ENCODE measurements at regions of chr16 and their contacts with region 1.

Region 1: GRCh38 chr16:56513972-56514371 is 5.9 kb downstream of the BBS2 start:
- DNase-seq: peak; percentile 43 to 67
- ATAC-seq: peak; percentile 94

Region 2: GRCh38 chr16:56691885-56692284 is 177.9 kb after region 1 on chr16:
- intact Hi-C with region 1: loop called in 1 of 2 experiments (anchors 5 kb)
- DNase-seq: peak; percentile 39 to 69
- ATAC-seq: peak; percentile 99

Measured in left colon (tissue), 2 donors.